Left cardiac atrium (tissue), 4 donors: ENCODE measurements at regions of chr20 and their contacts with region 1.

Region 1: GRCh38 chr20:33666293-33667244 is at the start of gene ACTL10:
- DNase-seq: peak; percentile 99
- ATAC-seq: peak; percentile 81 to 84
- total RNA-seq, gene ACTL10: 0.47 to 0.81 TPM

Region 2: GRCh38 chr20:33489495-33490022 is 177.0 kb before region 1 on chr20:
- intact Hi-C with region 1: loop called in 1 of 2 experiments (anchors 10 kb)
- DNase-seq: peak; percentile 100
- ATAC-seq: peak; percentile 97 to 99